Activated B cell treated with CpG ODN at 0.5 μM for 24 hours (primary cell): ENCODE measurements at regions of chr4 and their contacts with region 1.

Region 1: DNA sequence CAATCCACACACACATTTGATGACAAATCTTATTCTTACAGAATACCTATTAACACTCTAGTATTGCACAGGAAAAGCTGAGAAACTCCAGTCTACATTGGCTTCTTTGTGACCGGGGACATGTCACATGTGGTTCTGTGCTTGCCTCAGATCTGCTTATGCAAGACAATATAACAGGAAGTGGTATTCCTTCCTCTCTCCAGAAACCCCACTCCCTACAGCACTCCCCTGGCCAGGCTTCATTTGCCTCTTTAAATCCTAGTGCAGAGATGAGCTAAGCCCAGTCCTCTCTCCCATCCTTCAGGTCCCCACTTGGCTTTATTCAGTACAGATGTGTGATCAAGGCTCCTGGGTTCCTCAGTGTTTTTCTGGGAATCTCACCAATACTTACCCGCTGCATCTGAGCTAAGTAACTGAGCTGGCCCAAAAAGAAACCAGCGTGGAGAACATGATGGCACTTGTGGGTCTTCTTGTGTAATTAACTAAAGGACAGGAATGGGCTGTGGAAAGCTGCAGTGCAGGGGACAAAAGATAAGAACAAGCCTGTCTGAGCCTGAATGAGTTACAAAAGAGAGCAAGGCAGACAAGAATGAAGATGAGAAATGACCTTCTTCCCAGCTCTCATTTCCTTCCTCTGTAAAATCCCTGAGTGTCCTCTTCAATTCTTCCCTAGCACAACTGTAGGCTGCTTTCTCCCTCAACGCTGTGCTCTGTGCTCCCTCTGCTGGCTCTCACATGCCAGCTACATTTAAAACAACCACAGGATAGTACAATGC is 105.6 kb downstream of the HNRNPD start:
- DNase-seq: no peak
- ATAC-seq: peak; percentile 89
- H3K4me3 Mint-ChIP-seq: no peak overlapping the region
- H3K27ac Mint-ChIP-seq: no peak overlapping the region
- H3K4me1 Mint-ChIP-seq: peaks cover 32% of the 10 kb centered on the region
- H3K27me3 Mint-ChIP-seq: peaks cover 3% of the 10 kb centered on the region
- CTCF ChIP-seq: peak; percentile 62

Region 2: DNA sequence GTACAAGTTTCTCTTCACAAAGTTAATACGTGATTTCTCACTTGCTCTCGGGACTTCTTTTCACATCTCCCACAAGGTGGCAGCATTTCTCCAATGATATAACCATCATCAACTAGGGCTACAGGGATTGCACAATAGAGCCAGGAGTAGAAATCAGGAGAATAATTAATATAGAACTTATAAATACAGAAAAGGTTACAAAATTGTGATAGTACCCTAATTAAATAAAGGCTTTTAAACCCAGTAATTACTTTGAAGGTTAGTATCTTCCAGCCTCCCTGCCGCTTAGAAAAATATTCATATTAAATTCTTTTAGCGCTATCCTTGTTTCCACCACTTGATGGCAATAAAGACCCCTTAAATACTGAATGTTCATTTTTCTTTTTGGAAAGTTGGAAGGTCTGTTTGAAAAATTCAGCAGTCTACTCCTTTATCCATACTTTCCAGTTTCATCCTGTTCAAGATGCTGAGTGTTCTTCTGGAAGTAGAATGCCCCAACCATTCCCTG is 862.3 kb before region 1 on chr4:
- CTCF ChIA-PET with region 1: interaction called, 13 read pairs
- POLR2A ChIA-PET with region 1: no interaction called
- intact Hi-C with region 1: loop called (anchors 1 kb)
- DNase-seq: no peak
- ATAC-seq: peak; percentile 81
- H3K4me3 Mint-ChIP-seq: no peak overlapping the region
- H3K27ac Mint-ChIP-seq: no peak overlapping the region
- H3K4me1 Mint-ChIP-seq: peaks cover 3% of the 10 kb centered on the region
- H3K27me3 Mint-ChIP-seq: peaks cover 3% of the 10 kb centered on the region
- CTCF ChIP-seq: peak; percentile 93

Region 3: GRCh38 chr4:81844717-81845116 is 423.5 kb before region 1 on chr4:
- CTCF ChIA-PET with region 1: interaction called, 13 read pairs
- POLR2A ChIA-PET with region 1: no interaction called
- intact Hi-C with region 1: loop called (anchors 2 kb)
- DNase-seq: peak; percentile 33
- ATAC-seq: peak; percentile 98
- H3K4me3 Mint-ChIP-seq: no peak overlapping the region
- H3K27ac Mint-ChIP-seq: no peak overlapping the region
- H3K4me1 Mint-ChIP-seq: peaks cover 4% of the 10 kb centered on the region
- H3K27me3 Mint-ChIP-seq: no peaks in the 10 kb centered on the region
- CTCF ChIP-seq: peak; percentile 69

Region 4: DNA sequence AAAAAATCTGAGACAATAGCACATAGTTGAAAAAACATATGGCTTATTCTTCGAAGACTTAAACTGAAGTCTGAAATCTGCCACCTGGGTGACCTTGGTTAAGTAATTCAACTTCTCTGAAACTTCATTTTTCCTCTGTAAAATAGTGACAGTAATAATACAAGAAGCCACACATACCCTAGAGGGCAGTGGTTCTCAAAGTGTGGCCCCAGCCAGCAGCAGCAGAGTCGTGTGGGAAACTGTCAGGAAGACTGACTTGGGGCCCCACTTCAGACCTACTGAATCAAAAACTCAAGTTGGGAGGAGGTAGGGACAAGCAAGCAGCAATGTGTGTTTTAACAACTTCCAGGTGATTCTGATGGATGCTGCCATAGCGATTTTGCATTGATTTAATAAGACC is 144.3 kb before region 1 on chr4:
- CTCF ChIA-PET with region 1: interaction called, 4 read pairs
- POLR2A ChIA-PET with region 1: no interaction called
- intact Hi-C with region 1: loop called (anchors 5 kb)
- DNase-seq: no peak
- ATAC-seq: no peak
- H3K4me3 Mint-ChIP-seq: no peak overlapping the region
- H3K27ac Mint-ChIP-seq: no peak overlapping the region
- H3K4me1 Mint-ChIP-seq: no peaks in the 10 kb centered on the region
- H3K27me3 Mint-ChIP-seq: peaks cover 5% of the 10 kb centered on the region
- CTCF ChIP-seq: no peak

Region 5: DNA sequence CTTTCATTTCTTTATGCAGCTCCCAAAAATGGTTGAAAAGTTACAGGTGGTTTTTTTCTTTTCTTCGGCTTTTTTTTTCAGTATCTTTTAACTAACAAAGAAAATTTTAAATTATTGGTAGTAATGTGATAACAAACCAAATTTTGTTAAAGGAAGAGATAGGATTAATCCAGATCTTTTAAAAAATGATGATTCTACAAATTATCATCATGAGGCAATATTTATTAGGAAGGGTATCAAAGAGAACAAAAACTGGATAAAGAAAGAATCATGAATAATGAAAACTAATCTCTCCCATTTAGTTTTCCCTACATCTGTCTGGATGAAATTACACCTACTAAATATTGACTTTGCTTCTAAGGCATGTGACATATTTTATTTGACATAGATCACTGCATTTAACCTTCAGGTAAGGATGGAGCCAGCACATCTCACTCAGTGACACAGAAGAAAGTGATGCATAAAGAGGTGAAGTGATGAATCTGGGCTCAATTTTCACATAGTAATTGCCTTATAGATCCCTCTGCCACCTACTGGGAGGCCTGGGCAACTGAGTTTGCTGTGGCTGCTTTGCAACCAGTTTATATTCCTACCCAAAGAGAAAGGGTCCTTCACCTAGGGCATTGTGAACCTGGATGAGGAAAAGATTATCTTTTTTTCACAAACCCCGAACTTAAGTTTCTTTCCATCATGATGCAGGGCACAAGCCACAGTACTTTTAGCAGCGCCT is 50.1 kb before region 1 on chr4:
- CTCF ChIA-PET with region 1: no interaction called
- POLR2A ChIA-PET with region 1: no interaction called
- intact Hi-C with region 1: loop called (anchors 2 kb)
- DNase-seq: no peak
- ATAC-seq: no peak
- H3K4me3 Mint-ChIP-seq: no peak overlapping the region
- H3K27ac Mint-ChIP-seq: no peak overlapping the region
- H3K4me1 Mint-ChIP-seq: peaks cover 6% of the 10 kb centered on the region
- H3K27me3 Mint-ChIP-seq: peaks cover 2% of the 10 kb centered on the region
- CTCF ChIP-seq: no peak

Region 6: DNA sequence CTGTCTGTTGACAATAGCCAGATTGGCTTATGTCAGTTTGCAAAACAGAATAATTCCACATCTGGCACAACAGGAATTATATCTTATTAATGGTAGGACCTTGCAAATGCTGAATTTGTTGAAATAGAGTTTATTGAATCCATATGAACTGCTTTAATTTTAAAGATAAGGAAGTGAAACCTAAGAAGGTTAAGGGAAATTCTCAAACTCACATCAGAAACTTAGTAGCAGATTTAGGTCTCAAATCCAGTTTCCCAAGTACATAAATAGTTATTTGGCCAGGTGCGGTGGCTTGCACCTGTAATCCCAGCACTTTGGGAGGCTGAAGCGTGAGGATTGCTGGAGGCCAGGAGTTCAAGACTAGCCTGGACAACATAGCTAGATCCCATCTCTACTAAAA is 11.5 kb before region 1 on chr4:
- CTCF ChIA-PET with region 1: interaction called, 19 read pairs
- POLR2A ChIA-PET with region 1: interaction called, 7 read pairs
- intact Hi-C with region 1: no loop called
- DNase-seq: no peak
- ATAC-seq: peak; percentile 46
- H3K4me3 Mint-ChIP-seq: peak overlapping the region; percentile 13
- H3K27ac Mint-ChIP-seq: peak overlapping the region; percentile 67
- H3K4me1 Mint-ChIP-seq: peaks cover 53% of the 10 kb centered on the region
- H3K27me3 Mint-ChIP-seq: no peaks in the 10 kb centered on the region
- CTCF ChIP-seq: no peak

Region 7: GRCh38 chr4:82360298-82361177 is 92.3 kb after region 1 on chr4:
- CTCF ChIA-PET with region 1: interaction called, 26 read pairs
- POLR2A ChIA-PET with region 1: interaction called, 3 read pairs
- intact Hi-C with region 1: loop called (anchors 2 kb)
- DNase-seq: no peak
- ATAC-seq: peak; percentile 75
- H3K4me3 Mint-ChIP-seq: no peak overlapping the region
- H3K27ac Mint-ChIP-seq: peak overlapping the region; percentile 6
- H3K4me1 Mint-ChIP-seq: peaks cover 69% of the 10 kb centered on the region
- H3K27me3 Mint-ChIP-seq: no peaks in the 10 kb centered on the region
- CTCF ChIP-seq: peak; percentile 38